Caco-2 (cell line): ENCODE measurements at regions of chr6 and their contacts with region 1.

Region 1: DNA sequence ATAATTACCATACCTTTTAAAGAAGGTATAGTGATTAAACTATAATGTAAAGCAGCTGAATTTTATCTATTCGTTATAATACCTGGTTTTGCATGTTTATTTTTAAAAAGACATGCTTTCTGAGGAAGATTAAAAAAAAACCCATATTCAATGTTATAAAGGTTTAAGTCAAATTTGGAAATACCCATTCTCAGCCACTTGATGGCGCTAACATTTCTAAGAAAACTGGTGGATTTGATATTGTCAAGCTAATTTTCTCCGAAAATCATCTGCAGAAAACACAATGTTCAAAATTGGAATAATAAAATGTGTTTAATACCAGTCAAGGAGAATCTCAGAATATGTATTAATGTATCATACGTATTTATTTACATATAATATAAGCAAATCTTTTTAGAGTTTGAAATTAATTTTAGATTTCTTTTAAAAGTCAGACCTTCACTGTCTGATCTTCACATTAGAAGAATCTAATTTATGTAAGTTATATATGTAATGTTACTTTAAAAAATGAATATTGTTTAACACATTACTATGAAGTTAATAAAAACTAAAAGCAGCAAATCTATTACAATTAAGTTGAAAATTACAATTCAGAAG is 35.0 kb downstream of the SHPRH start:
- DNase-seq: peak in 1 of 2 experiments; percentile 16
- H3K4me3 ChIP-seq: no peak overlapping the region
- H3K4me3 Mint-ChIP-seq: no peak overlapping the region
- H3K27ac Mint-ChIP-seq: no peak overlapping the region
- H3K4me1 ChIP-seq: no peaks in the 10 kb centered on the region
- H3K4me1 Mint-ChIP-seq: no peaks in the 10 kb centered on the region
- H3K27me3 ChIP-seq: no peaks in the 10 kb centered on the region
- H3K27me3 Mint-ChIP-seq: no peaks in the 10 kb centered on the region
- CTCF ChIP-seq: peak; percentile 48 to 57

Region 2: GRCh38 chr6:145963216-145964068 is 34.3 kb after region 1 on chr6:
- CTCF ChIA-PET with region 1: interaction called, 4 read pairs
- POLR2A ChIA-PET with region 1: no interaction called
- intact Hi-C with region 1: loop called (anchors 5 kb)
- DNase-seq: peak in 1 of 2 experiments; percentile 59
- H3K4me3 ChIP-seq: peak overlapping the region; percentile 59
- H3K4me3 Mint-ChIP-seq: peak overlapping the region; percentile 95
- H3K27ac Mint-ChIP-seq: peak overlapping the region; percentile 92
- H3K4me1 ChIP-seq: peaks cover 22% of the 10 kb centered on the region
- H3K4me1 Mint-ChIP-seq: peaks cover 13% of the 10 kb centered on the region
- H3K27me3 ChIP-seq: no peaks in the 10 kb centered on the region
- H3K27me3 Mint-ChIP-seq: no peaks in the 10 kb centered on the region
- CTCF ChIP-seq: no peak

Region 3: GRCh38 chr6:146032387-146032786 is 103.3 kb after region 1 on chr6:
- CTCF ChIA-PET with region 1: no interaction called
- POLR2A ChIA-PET with region 1: no interaction called
- intact Hi-C with region 1: no loop called
- DNase-seq: no peak
- H3K4me3 ChIP-seq: no peak overlapping the region
- H3K4me3 Mint-ChIP-seq: no peak overlapping the region
- H3K27ac Mint-ChIP-seq: no peak overlapping the region
- H3K4me1 ChIP-seq: no peaks in the 10 kb centered on the region
- H3K4me1 Mint-ChIP-seq: no peaks in the 10 kb centered on the region
- H3K27me3 ChIP-seq: no peaks in the 10 kb centered on the region
- H3K27me3 Mint-ChIP-seq: peaks cover 6% of the 10 kb centered on the region
- CTCF ChIP-seq: no peak